K562 (cell line): ENCODE measurements at regions of chr4 and their contacts with region 1.

Region 1: GRCh38 chr4:143358923-143359643 is 22.4 kb downstream of the GAB1 start:
- DNase-seq: peak in 1 of 4 experiments; percentile 48
- ATAC-seq: peak; percentile 72
- H3K4me3 ChIP-seq: no peak overlapping the region
- H3K27ac ChIP-seq: peak overlapping the region; percentile 68
- H3K4me1 ChIP-seq: peaks cover 0 to 15% of the 10 kb centered on the region in 2 experiments
- H3K27me3 ChIP-seq: no peaks in the 10 kb centered on the region
- CTCF ChIP-seq: no peak
- EP300 ChIP-seq: no peak
- POLR2A ChIP-seq: no peak
- RAD21 ChIP-seq: no peak

Region 2: GRCh38 chr4:143184217-143185116 is 174.6 kb before region 1 on chr4 and contains the start of gene USP38:
- CTCF ChIA-PET with region 1: no interaction called
- POLR2A ChIA-PET with region 1: no interaction called
- in situ Hi-C with region 1: no loop called
- intact Hi-C with region 1: no loop called
- DNase-seq: peak; percentile 91 to 96 (median 94)
- ATAC-seq: peak; percentile 88
- H3K4me3 ChIP-seq: peak within 1 kb of the TSS; percentile 83
- H3K27ac ChIP-seq: peak within 1 kb of the TSS; percentile 92
- H3K4me1 ChIP-seq: peaks cover 0 to 8% of the 10 kb centered on the region in 2 experiments; a peak in 3 of 5 replicates
- H3K27me3 ChIP-seq: no peaks in the 10 kb centered on the region
- CTCF ChIP-seq: peak in 2 of 3 experiments; percentile 8 to 12; a peak in 1 of 6 replicates
- EP300 ChIP-seq: no peak
- POLR2A ChIP-seq: peak; percentile 93
- RAD21 ChIP-seq: no peak
- polyA plus RNA-seq, gene USP38: 4.2 to 4.7 TPM

Region 3: GRCh38 chr4:143344041-143344440 is 15.0 kb before region 1 on chr4:
- CTCF ChIA-PET with region 1: no interaction called
- POLR2A ChIA-PET with region 1: interaction called, 11 read pairs
- in situ Hi-C with region 1: no loop called
- intact Hi-C with region 1: loop called (anchors 1 kb)
- DNase-seq: no peak
- ATAC-seq: 0 out of 3 replicates have a peak, but pooled peaks have one; percentile 1
- H3K4me3 ChIP-seq: no peak overlapping the region
- H3K27ac ChIP-seq: peak overlapping the region; percentile 68
- H3K4me1 ChIP-seq: peaks cover 19 to 26% of the 10 kb centered on the region in 2 experiments; a peak in 4 of 5 replicates
- H3K27me3 ChIP-seq: no peaks in the 10 kb centered on the region
- CTCF ChIP-seq: no peak
- EP300 ChIP-seq: no peak
- POLR2A ChIP-seq: no peak
- RAD21 ChIP-seq: no peak